Left cardiac atrium (tissue), 4 donors: ENCODE measurements at regions of chr1 and their contacts with region 1.

Region 1: GRCh38 chr1:3423245-3423829 is 31.1 kb upstream of the ARHGEF16 start:
- DNase-seq: peak; percentile 60
- ATAC-seq: peak; percentile 62

Region 2: GRCh38 chr1:2429780-2430591 is 993.4 kb before region 1 on chr1:
- intact Hi-C with region 1: loop called in 1 of 2 experiments (anchors 10 kb)
- DNase-seq: no peak
- ATAC-seq: no peak

Region 3: DNA sequence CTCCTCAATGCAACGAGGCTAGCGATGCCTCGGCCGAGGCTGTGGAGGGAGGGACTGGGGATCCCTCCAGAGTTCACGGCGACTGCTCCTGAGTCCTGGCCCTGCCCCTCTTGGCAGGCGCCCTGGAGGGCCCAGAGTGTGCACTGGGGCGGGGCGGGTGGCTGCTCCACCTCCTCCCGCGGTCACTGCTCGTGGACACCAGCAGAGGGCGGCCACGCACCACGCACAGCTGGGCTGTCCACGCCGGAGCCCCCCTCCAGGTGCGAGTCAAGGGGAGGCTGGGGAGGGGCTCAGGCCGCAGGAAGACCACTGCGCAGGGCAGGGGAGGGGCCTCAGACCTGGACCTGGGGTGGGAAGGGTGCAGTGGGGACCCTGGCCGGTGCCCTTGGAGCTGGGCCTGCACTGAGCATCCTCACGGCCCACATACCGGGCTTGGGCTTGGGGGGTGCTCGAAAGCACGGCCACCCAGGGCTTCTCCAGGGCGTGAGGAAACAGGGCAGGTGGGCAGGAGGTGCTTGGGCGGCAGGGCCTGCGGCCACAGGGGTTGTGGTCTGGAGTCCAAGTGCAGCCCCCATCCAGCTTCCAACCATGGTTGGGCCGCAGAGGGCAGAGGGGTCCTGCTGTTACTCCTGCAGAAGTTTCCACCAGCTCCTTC is 601.2 kb before region 1 on chr1:
- intact Hi-C with region 1: loop called (anchors 5 to 10 kb)
- DNase-seq: peak; percentile 51
- ATAC-seq: peak; percentile 74 to 83

Region 4: GRCh38 chr1:2875707-2876561 is 547.4 kb before region 1 on chr1:
- intact Hi-C with region 1: loop called (anchors 5 to 10 kb)
- DNase-seq: no peak
- ATAC-seq: peak in 1 of 2 donors; percentile 60